PC-3 (cell line): ENCODE measurements at regions of chr2 and their contacts with region 1.

Region 1: DNA sequence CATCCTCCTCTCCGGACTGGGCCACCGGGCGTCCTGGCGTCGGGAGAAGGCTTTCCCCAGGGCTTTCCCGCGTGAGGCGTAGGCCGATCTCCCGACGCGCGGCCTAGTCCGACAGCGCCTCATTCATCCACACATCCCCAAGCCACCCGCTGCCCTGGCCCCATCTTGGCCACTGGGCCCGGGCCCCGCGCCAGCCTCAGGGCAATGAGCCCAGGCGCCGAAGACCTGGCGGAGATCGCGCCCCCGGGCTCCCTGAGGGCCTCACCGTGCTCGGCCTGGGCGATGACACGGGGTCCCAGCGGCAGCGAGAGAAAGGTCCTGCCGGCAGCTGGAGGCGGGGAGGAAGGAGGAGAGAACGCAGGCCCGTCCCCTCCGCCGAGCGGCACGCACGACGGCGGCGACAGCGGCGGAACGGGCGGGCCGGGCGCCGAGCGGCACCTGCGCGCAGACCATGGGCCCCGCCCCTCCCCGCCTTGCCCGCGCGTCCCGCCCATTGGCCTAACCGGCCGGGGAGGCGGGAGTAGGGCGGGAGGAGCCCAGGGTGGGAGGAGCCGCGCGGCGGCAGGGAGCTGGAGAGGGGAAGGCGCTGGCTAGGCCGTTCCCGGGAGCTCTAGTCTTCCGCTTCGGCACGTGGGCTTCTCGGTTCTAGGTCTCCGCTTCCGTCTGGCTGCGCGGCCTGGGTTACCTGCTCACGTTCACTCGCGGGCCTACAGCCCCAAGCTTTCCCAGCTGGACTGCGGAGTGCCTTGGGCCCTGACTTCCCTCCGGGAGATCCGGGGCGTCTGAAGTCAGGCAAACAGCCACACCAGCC is at the start of gene OLA1:
- DNase-seq: peak; percentile 96
- ATAC-seq: peak; percentile 95
- H3K4me3 ChIP-seq: peak within 1 kb of the TSS; percentile 90
- H3K27ac ChIP-seq: peak within 1 kb of the TSS; percentile 42
- H3K4me1 ChIP-seq: peaks cover 17% of the 10 kb centered on the region
- H3K27me3 ChIP-seq: no peaks in the 10 kb centered on the region
- CTCF ChIP-seq: no peak
- total RNA-seq, gene OLA1: 154 and 182 TPM in 2 replicates

Region 2: DNA sequence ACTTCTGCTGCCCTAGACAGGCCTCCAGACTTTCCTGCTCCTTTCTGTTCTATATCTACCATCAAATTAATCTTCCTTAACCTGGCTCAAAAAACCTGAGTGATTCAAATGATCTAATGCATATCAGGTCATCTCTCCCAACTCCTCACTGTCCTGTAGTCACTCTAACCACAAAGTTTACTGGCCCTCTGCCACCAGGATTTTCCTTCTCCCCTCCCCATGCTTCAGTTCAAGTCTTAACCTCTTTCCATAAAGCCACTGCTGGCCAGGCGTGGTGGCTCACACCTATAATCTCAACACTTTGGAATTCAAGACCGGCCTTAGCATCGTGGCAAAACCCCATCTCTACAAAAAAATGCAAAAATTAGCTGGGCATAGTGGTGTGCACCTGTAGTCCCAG is 275.8 kb before region 1 on chr2:
- CTCF ChIA-PET with region 1: no interaction called
- POLR2A ChIA-PET with region 1: no interaction called
- intact Hi-C with region 1: loop called (anchors 5 kb)
- DNase-seq: peak; percentile 95
- ATAC-seq: peak; percentile 95
- H3K4me3 ChIP-seq: no peak overlapping the region
- H3K27ac ChIP-seq: peak overlapping the region; percentile 76
- H3K4me1 ChIP-seq: peaks cover 33% of the 10 kb centered on the region
- H3K27me3 ChIP-seq: no peaks in the 10 kb centered on the region
- CTCF ChIP-seq: no peak

Region 3: GRCh38 chr2:174158003-174158402 is 90.4 kb before region 1 on chr2:
- CTCF ChIA-PET with region 1: no interaction called
- POLR2A ChIA-PET with region 1: no interaction called
- intact Hi-C with region 1: loop called (anchors 5 kb)
- DNase-seq: peak; percentile 70
- ATAC-seq: peak; percentile 88
- H3K4me3 ChIP-seq: no peak overlapping the region
- H3K27ac ChIP-seq: no peak overlapping the region
- H3K4me1 ChIP-seq: no peaks in the 10 kb centered on the region
- H3K27me3 ChIP-seq: no peaks in the 10 kb centered on the region
- CTCF ChIP-seq: peak; percentile 87

Region 4: GRCh38 chr2:174259981-174260380 is 11.6 kb after region 1 on chr2:
- CTCF ChIA-PET with region 1: interaction called, 3 read pairs
- POLR2A ChIA-PET with region 1: no interaction called
- intact Hi-C with region 1: loop called (anchors 2 kb)
- DNase-seq: peak; percentile 53
- ATAC-seq: no peak
- H3K4me3 ChIP-seq: no peak overlapping the region
- H3K27ac ChIP-seq: no peak overlapping the region
- H3K4me1 ChIP-seq: peaks cover 11% of the 10 kb centered on the region
- H3K27me3 ChIP-seq: no peaks in the 10 kb centered on the region
- CTCF ChIP-seq: no peak

Region 5: DNA sequence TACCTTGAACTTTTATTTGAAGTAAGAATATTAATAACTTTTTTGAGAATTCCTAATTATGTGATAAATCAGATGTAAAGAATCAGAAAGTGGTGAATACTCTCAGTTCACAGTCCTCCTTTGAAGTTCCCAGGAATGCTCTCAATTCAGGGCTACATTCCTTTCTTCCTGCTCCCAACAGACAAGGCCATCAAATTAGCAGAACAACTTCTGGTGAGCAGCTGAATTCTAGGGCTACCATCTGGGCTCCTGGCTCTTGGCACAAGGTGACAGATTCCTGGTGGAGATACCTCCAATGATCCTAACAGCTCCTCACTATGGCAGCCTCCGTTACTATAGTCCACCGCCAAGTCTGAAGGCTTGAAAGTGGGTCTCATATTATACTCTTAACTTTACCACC is 37.8 kb after region 1 on chr2:
- CTCF ChIA-PET with region 1: no interaction called
- POLR2A ChIA-PET with region 1: no interaction called
- intact Hi-C with region 1: no loop called
- DNase-seq: no peak
- ATAC-seq: no peak
- H3K4me3 ChIP-seq: no peak overlapping the region
- H3K27ac ChIP-seq: no peak overlapping the region
- H3K4me1 ChIP-seq: no peaks in the 10 kb centered on the region
- H3K27me3 ChIP-seq: no peaks in the 10 kb centered on the region
- CTCF ChIP-seq: no peak

Region 6: GRCh38 chr2:174334781-174335251 is 86.4 kb after region 1 on chr2 and contains the start of gene SP9:
- CTCF ChIA-PET with region 1: no interaction called
- POLR2A ChIA-PET with region 1: no interaction called
- intact Hi-C with region 1: loop called (anchors 1 kb)
- DNase-seq: no peak
- ATAC-seq: no peak
- H3K4me3 ChIP-seq: peak within 1 kb of the TSS; percentile 78
- H3K27ac ChIP-seq: no peak within 1 kb of the TSS
- H3K4me1 ChIP-seq: peaks cover 4% of the 10 kb centered on the region; the same call in 1 of the 2 replicates
- H3K27me3 ChIP-seq: no peaks in the 10 kb centered on the region
- CTCF ChIP-seq: no peak
- total RNA-seq, gene SP9: not detected in 2 replicates